ENCODE measurements at regions of chr1 and their contacts with region 1.

Region 1: DNA sequence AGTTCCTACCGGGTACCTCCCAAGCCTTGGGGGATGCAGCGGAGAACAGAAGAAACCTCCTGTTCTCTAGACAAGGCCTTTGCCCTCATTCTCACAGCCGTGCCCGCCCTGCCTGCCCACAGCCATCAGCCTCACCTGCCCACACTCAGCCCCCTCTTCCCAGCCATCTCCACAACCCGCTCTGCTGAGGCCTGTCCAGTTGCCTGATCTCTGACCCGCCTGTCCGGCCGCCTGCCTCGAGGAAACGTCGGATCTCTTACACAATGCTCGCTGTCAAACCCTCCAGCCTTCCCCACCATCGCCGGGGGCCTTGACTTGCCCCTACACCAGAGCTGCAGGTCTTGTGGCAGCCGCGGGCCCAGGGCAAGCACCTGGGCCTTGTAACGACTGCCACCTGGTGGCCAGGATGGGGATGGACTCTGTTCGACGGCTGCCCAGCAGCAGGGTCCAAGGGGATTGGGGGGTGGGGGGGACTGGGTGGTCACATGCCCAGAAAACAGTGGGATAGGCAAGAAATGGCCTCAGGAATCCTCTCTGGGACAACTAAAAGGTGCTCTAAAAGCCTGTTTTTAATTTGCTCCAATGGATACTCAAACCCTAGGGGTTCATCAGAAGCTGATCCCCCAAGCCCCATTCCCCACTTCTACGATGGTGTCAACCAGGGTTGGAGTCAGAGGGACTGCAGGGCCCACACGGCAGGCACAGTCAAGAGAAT is 31.0 kb downstream of the SLC45A1 start:
- DNase-seq: peak; percentile 71 to 85
- ATAC-seq: peak; percentile 86 to 98 (median 94)
- H3K4me3 ChIP-seq: no peak overlapping the region
- H3K4me3 Mint-ChIP-seq: no peak overlapping the region
- H3K27ac ChIP-seq: no peak overlapping the region
- H3K27ac Mint-ChIP-seq: peak overlapping the region in 1 of 2 donors; percentile 54
- H3K4me1 ChIP-seq: peaks cover 6% of the 10 kb centered on the region
- H3K4me1 Mint-ChIP-seq: peaks cover 5 to 6% of the 10 kb centered on the region in 2 donors
- H3K27me3 ChIP-seq: no peaks in the 10 kb centered on the region
- H3K27me3 Mint-ChIP-seq: peaks cover 0 to 8% of the 10 kb centered on the region in 2 donors
- CTCF ChIP-seq: peak; percentile 79

Region 2: DNA sequence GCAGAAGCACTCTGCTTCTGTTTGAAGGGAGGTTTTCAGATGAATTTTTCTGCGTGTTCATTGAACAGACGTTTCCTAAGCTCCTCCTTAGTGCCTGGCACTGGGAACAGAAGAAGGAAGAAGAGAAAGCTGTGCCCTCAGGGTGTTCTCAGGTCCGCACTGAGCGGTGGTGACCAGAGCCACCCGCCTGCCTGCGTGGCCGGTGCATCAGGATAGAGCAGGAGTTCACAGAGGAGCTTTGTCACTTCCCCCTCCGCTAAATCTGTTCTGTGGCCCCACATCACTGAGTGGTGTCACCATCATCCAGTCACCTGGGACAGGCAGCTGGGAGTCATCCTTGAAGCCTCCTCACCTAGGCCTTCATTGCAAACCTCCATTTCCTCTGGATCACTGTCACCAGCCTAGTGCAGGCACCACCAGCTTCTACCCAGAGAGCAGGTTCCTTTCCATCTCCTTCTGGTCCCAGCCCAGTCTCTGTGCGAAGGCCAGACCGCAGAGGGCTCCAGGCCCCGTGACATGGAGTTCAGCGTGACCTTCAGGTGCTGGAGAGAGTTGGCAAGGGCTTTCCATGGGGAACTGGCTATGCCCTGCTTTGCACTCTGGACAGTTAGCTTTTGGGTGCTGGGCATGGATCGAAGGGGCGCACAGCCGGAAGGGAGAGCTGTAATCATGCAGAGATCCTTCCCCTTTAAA is 365.7 kb before region 1 on chr1:
- intact Hi-C with region 1: loop called (anchors 1 kb)
- DNase-seq: no peak
- ATAC-seq: no peak
- H3K4me3 ChIP-seq: no peak overlapping the region
- H3K4me3 Mint-ChIP-seq: no peak overlapping the region
- H3K27ac ChIP-seq: no peak overlapping the region
- H3K27ac Mint-ChIP-seq: peak overlapping the region in 1 of 2 donors; percentile 3
- H3K4me1 ChIP-seq: peaks cover 7% of the 10 kb centered on the region
- H3K4me1 Mint-ChIP-seq: peaks cover 12 to 14% of the 10 kb centered on the region in 2 donors
- H3K27me3 ChIP-seq: no peaks in the 10 kb centered on the region
- H3K27me3 Mint-ChIP-seq: no peaks in the 10 kb centered on the region
- CTCF ChIP-seq: no peak

Region 3: GRCh38 chr1:8015036-8015808 is 333.7 kb before region 1 on chr1:
- intact Hi-C with region 1: loop called (anchors 1 kb)
- DNase-seq: peak in 1 of 2 donors; percentile 78
- ATAC-seq: peak; percentile 52 to 82 (median 64)
- H3K4me3 ChIP-seq: no peak overlapping the region
- H3K4me3 Mint-ChIP-seq: no peak overlapping the region
- H3K27ac ChIP-seq: no peak overlapping the region
- H3K27ac Mint-ChIP-seq: no peak overlapping the region
- H3K4me1 ChIP-seq: no peaks in the 10 kb centered on the region
- H3K4me1 Mint-ChIP-seq: peaks cover 0 to 5% of the 10 kb centered on the region in 2 donors
- H3K27me3 ChIP-seq: no peaks in the 10 kb centered on the region
- H3K27me3 Mint-ChIP-seq: peaks cover 23 to 33% of the 10 kb centered on the region in 2 donors
- CTCF ChIP-seq: peak; percentile 65

Measured in natural killer cell (primary cell).